H1 (cell line): ENCODE measurements at regions of chr1 and their contacts with region 1.

Region 1: DNA sequence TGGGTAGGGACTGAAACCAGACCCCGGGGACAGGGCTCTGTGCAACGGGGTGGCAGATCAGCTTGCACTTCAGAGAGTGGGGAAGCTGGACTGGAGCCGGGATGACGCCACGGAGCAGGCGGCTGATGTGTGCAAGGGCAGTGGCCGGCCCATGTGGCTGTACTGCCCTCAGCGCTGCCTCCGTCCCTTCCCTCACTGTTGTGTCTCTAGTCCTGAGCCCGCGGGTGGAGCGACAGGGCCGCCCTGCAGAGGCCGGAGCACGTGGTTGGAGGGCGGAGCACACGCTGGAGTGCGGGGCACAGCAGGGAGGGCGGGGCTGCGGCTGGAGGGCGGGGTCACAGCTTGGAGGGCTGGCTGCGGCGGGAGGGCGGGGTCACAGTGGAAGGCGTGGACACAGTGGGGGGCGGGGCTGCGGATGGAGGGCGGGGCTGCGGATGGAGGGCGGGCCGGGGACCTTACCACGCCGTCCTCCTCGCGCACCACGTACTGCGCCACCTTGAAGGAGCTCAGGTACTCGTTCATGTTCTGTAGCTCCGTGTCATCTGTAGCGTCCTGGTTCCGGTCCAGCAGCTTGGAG is 52.4 kb downstream of the CHD5 start:
- DNase-seq: peak; percentile 71 to 92
- H3K4me3 ChIP-seq: peak overlapping the region in 2 of 4 experiments; percentile 6 to 47; a peak in 3 of 8 replicates
- H3K27ac ChIP-seq: no peak overlapping the region
- H3K4me1 ChIP-seq: peaks cover 0 to 9% (median 4%) of the 10 kb centered on the region in 4 experiments; a peak in 4 of 7 replicates
- H3K27me3 ChIP-seq: peaks cover 0 to 16% (median 12%) of the 10 kb centered on the region in 4 experiments; a peak in 6 of 7 replicates
- CTCF ChIP-seq: no peak
- EP300 ChIP-seq: no peak
- POLR2A ChIP-seq: no peak
- RAD21 ChIP-seq: no peak

Region 2: GRCh38 chr1:6141592-6141991 is 13.9 kb after region 1 on chr1:
- CTCF ChIA-PET with region 1: interaction called, 16 read pairs
- POLR2A ChIA-PET with region 1: interaction called, 4 read pairs
- DNase-seq: peak in 1 of 2 experiments; percentile 67
- H3K4me3 ChIP-seq: no peak overlapping the region
- H3K27ac ChIP-seq: no peak overlapping the region
- H3K4me1 ChIP-seq: peaks cover 0 to 11% (median under 1%) of the 10 kb centered on the region in 4 experiments; a peak in 2 of 7 replicates
- H3K27me3 ChIP-seq: no peaks in the 10 kb centered on the region; a peak in 1 of 7 replicates
- CTCF ChIP-seq: peak; percentile 64 to 76 (median 70)
- EP300 ChIP-seq: no peak
- POLR2A ChIP-seq: no peak
- RAD21 ChIP-seq: peak; percentile 61 to 63